Left cardiac atrium (tissue), 4 donors: ENCODE measurements at regions of chr3 and their contacts with region 1.

Region 1: DNA sequence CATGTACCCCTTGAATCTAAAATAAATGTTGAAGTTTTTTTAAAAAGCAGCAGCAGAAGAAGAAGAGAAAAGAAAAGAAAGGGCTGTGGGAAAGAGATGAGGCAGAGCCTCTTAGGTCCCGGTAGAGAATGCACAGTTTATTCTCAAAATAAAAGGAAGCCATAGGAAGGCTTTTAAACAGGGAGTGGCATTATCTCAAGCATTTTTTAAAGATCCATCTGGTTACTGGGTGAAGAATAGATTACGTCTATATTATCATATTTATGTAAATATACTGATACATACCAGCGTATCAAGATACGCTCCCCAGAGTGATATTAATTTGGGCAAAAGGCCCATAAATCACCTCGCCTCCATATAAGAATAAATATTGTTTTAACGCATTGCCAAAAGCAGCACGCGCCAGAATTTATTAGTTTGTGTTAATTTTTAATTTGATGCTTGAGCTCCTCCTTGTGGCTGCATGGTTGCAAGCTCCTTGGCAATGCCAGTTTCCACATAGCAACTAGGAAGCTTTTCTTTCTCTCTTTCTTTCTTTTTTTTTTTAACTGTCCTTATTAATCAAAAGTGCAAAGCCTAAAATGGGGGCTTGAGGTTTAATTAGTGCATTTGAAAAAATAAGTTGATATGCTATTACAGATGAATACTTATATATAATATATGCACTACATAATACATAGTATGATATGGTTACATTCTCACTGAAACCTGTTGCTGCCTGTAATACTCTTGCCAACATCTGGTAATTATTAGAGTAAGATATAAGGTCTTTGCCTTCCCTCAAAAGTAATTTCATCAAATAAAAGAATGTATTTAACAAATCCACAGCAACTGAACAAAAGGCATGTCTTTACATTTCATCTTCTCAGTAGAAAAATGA is 242.8 kb upstream of the UBE2E2 start:
- DNase-seq: peak; percentile 47
- ATAC-seq: peak in 1 of 2 donors; percentile 49

Region 2: GRCh38 chr3:21826416-21826815 is 1133.9 kb before region 1 on chr3:
- intact Hi-C with region 1: no loop called
- DNase-seq: no peak
- ATAC-seq: peak in 1 of 2 donors; percentile 34

Region 3: DNA sequence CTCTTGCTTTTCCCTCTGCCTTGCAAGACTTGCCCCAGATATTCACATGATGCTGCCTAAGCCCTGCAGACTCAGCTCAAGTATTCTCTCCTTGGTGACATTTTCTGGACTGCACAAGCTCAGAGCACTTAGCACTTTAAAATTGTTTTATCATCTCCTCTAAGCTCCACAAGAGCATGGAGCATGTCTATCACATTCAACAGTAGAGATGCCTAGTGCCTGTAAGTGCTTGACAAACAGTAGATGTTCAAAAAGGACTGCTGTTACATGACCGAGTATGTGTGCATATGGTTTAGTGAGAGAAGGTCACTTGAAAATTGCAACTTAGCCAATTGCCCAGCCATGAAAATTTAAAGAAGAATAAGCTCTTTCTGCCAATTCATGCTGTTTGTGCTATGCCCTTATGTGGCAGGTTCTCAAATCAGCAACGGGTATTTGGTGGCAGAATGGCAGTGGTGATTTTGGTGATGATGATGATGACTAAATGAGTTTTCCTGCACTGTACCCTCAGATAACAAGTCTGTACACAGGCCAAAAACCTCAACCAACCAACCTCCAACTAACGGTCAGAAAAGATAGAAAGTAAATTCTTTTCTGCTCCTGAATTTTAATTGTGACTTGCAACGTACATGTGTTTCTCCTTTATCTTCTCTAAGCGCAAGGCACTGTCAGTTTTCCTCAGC is 404.5 kb before region 1 on chr3:
- intact Hi-C with region 1: loop called in 1 of 2 experiments (anchors 5 kb)
- DNase-seq: no peak
- ATAC-seq: no peak

Region 4: GRCh38 chr3:22565393-22565792 is 395.0 kb before region 1 on chr3:
- intact Hi-C with region 1: loop called (anchors 5 kb)
- DNase-seq: no peak
- ATAC-seq: no peak

Region 5: DNA sequence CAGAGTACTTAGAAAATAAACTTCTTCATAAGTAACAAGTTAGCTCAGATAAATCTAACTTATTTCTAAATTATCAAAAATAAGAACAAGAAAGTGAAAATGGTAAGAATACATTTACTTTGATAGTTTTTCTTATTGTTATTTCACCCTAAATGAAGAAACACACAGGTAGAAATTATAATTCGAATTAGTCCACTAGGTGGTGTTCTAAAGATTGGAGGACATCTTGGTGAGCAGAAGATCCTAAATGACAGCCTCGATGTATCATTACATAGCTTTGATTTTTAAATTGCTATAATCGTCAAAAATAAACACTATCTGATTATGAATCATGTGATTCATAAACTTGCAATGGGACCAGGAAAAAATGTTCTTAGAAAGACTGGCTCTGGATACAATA is 38.0 kb before region 1 on chr3:
- intact Hi-C with region 1: loop called in 1 of 2 experiments (anchors 5 kb)
- DNase-seq: no peak
- ATAC-seq: no peak

Region 6: DNA sequence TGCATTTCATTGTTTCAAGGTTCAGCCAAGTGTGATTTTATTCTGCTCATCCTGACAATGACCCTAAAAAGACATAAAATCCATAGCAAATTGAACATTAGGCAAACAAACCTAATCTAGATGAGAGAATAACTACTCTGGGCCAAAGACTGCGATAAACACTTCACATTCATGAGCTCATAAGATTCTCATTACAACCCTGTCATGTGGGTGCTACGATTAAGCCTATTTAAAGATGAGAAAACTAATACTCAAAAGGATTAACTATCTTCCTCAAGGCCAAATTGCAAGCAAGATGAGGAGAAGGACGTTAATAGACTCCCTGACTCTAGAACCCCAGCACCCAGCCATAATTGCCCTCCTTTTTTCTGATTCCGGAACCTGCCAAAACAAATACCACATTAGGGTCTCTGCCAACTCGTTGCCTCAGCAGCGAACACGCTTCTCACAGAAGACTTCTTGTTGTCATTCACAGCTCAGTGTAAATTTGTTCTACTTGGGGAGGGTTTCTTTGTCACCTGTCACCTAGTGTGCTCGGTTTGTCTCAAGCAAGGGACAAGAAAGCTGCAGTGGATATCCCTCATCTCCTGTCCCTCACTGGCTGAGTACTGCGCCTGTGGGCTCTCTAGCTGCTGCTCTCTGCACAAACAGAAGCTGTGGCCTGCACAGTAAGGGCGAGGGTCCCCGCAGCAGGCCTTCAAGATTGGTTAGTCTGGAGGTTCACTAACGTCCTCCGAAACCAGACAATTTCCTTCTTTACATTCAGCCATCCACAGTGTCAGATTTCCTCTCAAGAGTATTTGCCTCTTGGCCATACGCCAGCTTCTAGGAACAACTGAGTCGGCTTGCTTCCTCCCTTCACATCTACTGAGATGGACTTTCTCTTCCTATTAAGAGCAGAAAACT is 42.7 kb after region 1 on chr3:
- intact Hi-C with region 1: no loop called
- DNase-seq: no peak
- ATAC-seq: peak; percentile 34 to 37

Region 7: DNA sequence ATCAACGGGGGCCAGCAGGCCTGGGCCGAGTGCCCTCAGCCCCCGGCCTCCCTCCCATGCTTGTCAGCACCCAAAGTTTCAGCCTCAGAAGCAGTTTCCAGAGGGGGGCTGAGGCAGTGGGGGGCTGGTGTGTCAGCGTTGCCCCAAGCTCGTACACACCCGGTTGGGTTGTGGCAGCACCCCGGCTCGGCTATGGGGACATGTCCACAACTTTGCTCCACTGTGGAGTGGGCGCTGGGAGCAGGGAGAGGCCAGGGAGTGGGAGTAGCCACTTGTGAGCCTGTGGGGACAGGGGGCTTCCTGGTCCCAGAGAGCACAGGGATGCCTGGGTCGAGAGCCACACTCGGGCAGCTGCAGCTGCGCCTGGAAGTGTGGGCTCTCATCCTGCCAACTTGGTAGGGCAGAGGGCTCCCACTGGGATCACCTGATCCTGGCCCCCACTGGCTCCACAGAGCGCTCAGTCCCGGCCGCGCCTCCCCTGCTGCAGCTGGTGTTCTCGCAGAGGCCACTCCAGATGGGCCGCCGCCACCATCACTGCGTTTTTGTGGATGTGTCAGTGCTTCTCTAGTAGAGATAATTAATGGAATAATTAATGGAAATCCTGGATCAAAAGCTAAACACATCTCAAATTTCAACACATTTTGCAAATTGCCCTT is 1059.8 kb after region 1 on chr3:
- intact Hi-C with region 1: no loop called
- DNase-seq: no peak
- ATAC-seq: no peak